Activated CD8-positive, alpha-beta T cell treated with anti-CD3 and anti-CD28 coated beads, Interleukin-2, amount 10 ng/mL, durations not matched to agents 7 days and 5 days (primary cell): ENCODE measurements at regions of chr7 and their contacts with region 1.

Region 1: GRCh38 chr7:156903232-156903909 is 10.4 kb upstream of the LMBR1 start:
- DNase-seq: peak; percentile 54
- ATAC-seq: peak; percentile 83
- H3K4me3 Mint-ChIP-seq: peak overlapping the region; percentile 20
- H3K27ac Mint-ChIP-seq: peak overlapping the region; percentile 65
- H3K4me1 Mint-ChIP-seq: peaks cover 9% of the 10 kb centered on the region
- H3K27me3 Mint-ChIP-seq: peaks cover 13% of the 10 kb centered on the region

Region 2: GRCh38 chr7:156892821-156893706 is 10.3 kb before region 1 on chr7 and contains the start of gene LMBR1:
- CTCF ChIA-PET with region 1: interaction called, 10 read pairs
- POLR2A ChIA-PET with region 1: interaction called, 3 read pairs
- DNase-seq: peak; percentile 95
- ATAC-seq: peak; percentile 90
- H3K4me3 Mint-ChIP-seq: peak within 1 kb of the TSS; percentile 89
- H3K27ac Mint-ChIP-seq: peak within 1 kb of the TSS; percentile 94
- H3K4me1 Mint-ChIP-seq: peaks cover 53% of the 10 kb centered on the region
- H3K27me3 Mint-ChIP-seq: no peaks in the 10 kb centered on the region
- total RNA-seq, gene LMBR1: 49.7 to 51.2 TPM

Region 3: DNA sequence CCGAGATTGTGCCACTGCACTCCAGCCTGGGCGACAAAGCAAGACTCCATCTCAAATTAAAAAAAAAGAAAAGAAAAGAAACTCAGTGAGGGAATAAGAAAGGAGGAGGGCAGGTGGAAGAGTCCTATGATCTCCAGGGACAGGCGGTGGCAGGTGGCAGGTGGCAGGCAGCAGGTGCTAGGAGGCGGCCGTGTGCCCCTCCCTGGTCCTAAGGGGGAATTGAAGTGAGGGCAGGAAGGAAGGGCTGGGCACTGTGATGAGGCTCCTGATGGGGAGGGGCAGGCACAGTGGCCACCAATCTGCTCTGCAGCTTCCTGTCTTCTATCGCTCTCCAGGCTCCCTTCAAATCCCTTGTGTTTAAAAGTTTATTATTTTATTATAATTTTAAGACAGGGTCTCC is 194.2 kb after region 1 on chr7:
- CTCF ChIA-PET with region 1: no interaction called
- POLR2A ChIA-PET with region 1: no interaction called
- DNase-seq: no peak
- ATAC-seq: no peak
- H3K4me3 Mint-ChIP-seq: no peak overlapping the region
- H3K27ac Mint-ChIP-seq: no peak overlapping the region
- H3K4me1 Mint-ChIP-seq: no peaks in the 10 kb centered on the region
- H3K27me3 Mint-ChIP-seq: peaks cover 2% of the 10 kb centered on the region

Region 4: GRCh38 chr7:157211690-157212089 is 308.3 kb after region 1 on chr7:
- CTCF ChIA-PET with region 1: no interaction called
- POLR2A ChIA-PET with region 1: no interaction called
- DNase-seq: no peak
- ATAC-seq: no peak
- H3K4me3 Mint-ChIP-seq: no peak overlapping the region
- H3K27ac Mint-ChIP-seq: no peak overlapping the region
- H3K4me1 Mint-ChIP-seq: no peaks in the 10 kb centered on the region
- H3K27me3 Mint-ChIP-seq: no peaks in the 10 kb centered on the region